Caco-2 (cell line): ENCODE measurements at regions of chr17 and their contacts with region 1.

Region 1: DNA sequence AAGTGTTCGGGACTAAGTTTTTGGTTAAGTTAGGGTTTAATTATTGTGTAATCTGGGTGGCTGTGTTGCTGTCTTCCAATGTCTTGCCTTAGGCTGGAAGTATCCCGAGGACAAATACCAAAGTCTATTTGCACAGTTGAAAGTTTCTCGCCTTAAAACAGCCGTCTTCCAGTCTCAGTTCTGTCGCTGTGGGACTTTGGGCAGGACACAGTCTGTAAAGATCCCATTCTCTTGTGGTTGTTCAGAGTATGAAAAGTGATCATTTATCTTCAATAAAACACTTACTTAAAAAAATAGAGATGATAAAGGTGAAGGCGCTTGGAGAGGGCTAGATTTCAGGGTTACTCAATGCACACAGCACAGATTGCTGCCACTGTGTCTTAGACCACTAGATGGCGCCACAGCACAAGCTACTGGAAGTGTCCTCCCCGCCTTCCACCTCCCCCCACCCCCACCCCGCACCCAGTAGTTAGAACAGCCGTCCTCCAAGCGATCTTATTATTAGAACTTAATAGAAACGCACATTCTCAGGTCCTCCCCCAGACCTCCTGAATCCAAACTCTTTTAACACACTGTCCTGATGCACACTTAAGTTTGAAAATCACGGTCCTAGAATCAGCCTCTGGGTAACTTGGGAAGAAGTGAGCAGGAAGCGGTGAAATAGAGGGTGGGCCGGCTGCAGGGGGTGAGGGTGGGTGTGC is 45.9 kb downstream of the AKAP1 start:
- DNase-seq: peak; percentile 85 to 87
- H3K4me3 ChIP-seq: peak overlapping the region; percentile 27; the same call in 1 of the 2 replicates
- H3K4me3 Mint-ChIP-seq: peak overlapping the region; percentile 57
- H3K27ac Mint-ChIP-seq: no peak overlapping the region
- H3K4me1 ChIP-seq: peaks cover 6% of the 10 kb centered on the region; the same call in 1 of the 2 replicates
- H3K4me1 Mint-ChIP-seq: peaks cover 10% of the 10 kb centered on the region
- H3K27me3 ChIP-seq: no peaks in the 10 kb centered on the region
- H3K27me3 Mint-ChIP-seq: no peaks in the 10 kb centered on the region
- CTCF ChIP-seq: peak; percentile 92 to 97

Region 2: GRCh38 chr17:56985371-56986162 is 145.3 kb before region 1 on chr17:
- CTCF ChIA-PET with region 1: no interaction called
- POLR2A ChIA-PET with region 1: no interaction called
- intact Hi-C with region 1: no loop called
- DNase-seq: no peak
- H3K4me3 ChIP-seq: no peak overlapping the region
- H3K4me3 Mint-ChIP-seq: no peak overlapping the region
- H3K27ac Mint-ChIP-seq: no peak overlapping the region
- H3K4me1 ChIP-seq: no peaks in the 10 kb centered on the region
- H3K4me1 Mint-ChIP-seq: peaks cover 7% of the 10 kb centered on the region
- H3K27me3 ChIP-seq: no peaks in the 10 kb centered on the region
- H3K27me3 Mint-ChIP-seq: no peaks in the 10 kb centered on the region
- CTCF ChIP-seq: no peak

Region 3: GRCh38 chr17:57106107-57106835 is 24.6 kb before region 1 on chr17:
- CTCF ChIA-PET with region 1: no interaction called
- POLR2A ChIA-PET with region 1: no interaction called
- intact Hi-C with region 1: no loop called
- DNase-seq: peak; percentile 51 to 52
- H3K4me3 ChIP-seq: no peak overlapping the region
- H3K4me3 Mint-ChIP-seq: no peak overlapping the region
- H3K27ac Mint-ChIP-seq: no peak overlapping the region
- H3K4me1 ChIP-seq: peaks cover 13% of the 10 kb centered on the region
- H3K4me1 Mint-ChIP-seq: peaks cover 6% of the 10 kb centered on the region
- H3K27me3 ChIP-seq: no peaks in the 10 kb centered on the region
- H3K27me3 Mint-ChIP-seq: no peaks in the 10 kb centered on the region
- CTCF ChIP-seq: peak; percentile 34 to 50

Region 4: GRCh38 chr17:57142925-57143324 is 12.0 kb after region 1 on chr17:
- CTCF ChIA-PET with region 1: no interaction called
- POLR2A ChIA-PET with region 1: no interaction called
- intact Hi-C with region 1: no loop called
- DNase-seq: no peak
- H3K4me3 ChIP-seq: no peak overlapping the region
- H3K4me3 Mint-ChIP-seq: no peak overlapping the region
- H3K27ac Mint-ChIP-seq: no peak overlapping the region
- H3K4me1 ChIP-seq: 0 out of 2 replicates have a peak, but pooled peaks cover 2% of the 10 kb centered on the region
- H3K4me1 Mint-ChIP-seq: no peaks in the 10 kb centered on the region
- H3K27me3 ChIP-seq: no peaks in the 10 kb centered on the region
- H3K27me3 Mint-ChIP-seq: no peaks in the 10 kb centered on the region
- CTCF ChIP-seq: no peak

Region 5: GRCh38 chr17:57158296-57158695 is 27.4 kb after region 1 on chr17:
- CTCF ChIA-PET with region 1: no interaction called
- POLR2A ChIA-PET with region 1: no interaction called
- intact Hi-C with region 1: no loop called
- DNase-seq: no peak
- H3K4me3 ChIP-seq: no peak overlapping the region
- H3K4me3 Mint-ChIP-seq: no peak overlapping the region
- H3K27ac Mint-ChIP-seq: no peak overlapping the region
- H3K4me1 ChIP-seq: no peaks in the 10 kb centered on the region
- H3K4me1 Mint-ChIP-seq: no peaks in the 10 kb centered on the region
- H3K27me3 ChIP-seq: no peaks in the 10 kb centered on the region
- H3K27me3 Mint-ChIP-seq: no peaks in the 10 kb centered on the region
- CTCF ChIP-seq: no peak

Region 6: GRCh38 chr17:57408071-57408811 is 277.3 kb after region 1 on chr17:
- CTCF ChIA-PET with region 1: no interaction called
- POLR2A ChIA-PET with region 1: no interaction called
- intact Hi-C with region 1: loop called (anchors 10 kb)
- DNase-seq: no peak
- H3K4me3 ChIP-seq: no peak overlapping the region
- H3K4me3 Mint-ChIP-seq: no peak overlapping the region
- H3K27ac Mint-ChIP-seq: peak overlapping the region; percentile 93
- H3K4me1 ChIP-seq: peaks cover 30% of the 10 kb centered on the region
- H3K4me1 Mint-ChIP-seq: peaks cover 32% of the 10 kb centered on the region
- H3K27me3 ChIP-seq: no peaks in the 10 kb centered on the region; the same call in 1 of the 2 replicates
- H3K27me3 Mint-ChIP-seq: no peaks in the 10 kb centered on the region
- CTCF ChIP-seq: no peak

Region 7: DNA sequence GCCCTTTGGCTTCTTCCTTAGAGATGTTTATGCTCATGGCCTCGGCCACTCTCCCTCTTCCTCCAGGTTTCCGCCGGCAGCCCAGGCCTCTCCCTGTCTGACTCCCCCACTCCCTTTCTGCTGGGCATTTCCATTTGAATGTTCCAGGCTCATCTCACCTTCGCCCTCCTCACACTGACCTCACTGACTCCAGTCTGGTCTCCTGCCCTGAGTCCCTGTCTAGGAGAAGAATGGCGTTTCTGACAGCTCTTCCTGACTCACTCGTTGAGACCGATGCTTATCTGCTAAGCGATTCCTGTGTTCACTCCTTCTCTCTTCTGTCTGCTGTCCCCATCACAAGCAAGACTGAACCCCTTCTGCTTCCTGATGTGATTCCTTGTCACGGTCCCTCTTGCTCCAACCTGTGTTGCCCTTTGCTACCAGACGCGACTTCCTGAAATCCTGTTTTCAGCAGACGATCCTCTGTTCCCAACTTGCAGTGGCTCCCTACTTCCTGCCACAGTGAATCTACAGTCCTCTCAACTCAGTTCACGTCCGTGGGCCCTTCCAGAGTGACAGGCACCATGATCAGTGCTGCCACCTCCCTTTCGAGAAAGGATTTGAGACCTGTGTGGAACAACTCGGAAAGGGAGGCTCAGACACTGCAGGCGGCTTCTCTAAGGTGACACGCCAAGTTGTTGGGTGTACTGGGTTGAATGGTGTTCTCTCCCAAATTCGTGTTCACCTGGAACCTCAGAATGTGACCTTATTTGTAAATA is 301.8 kb after region 1 on chr17:
- CTCF ChIA-PET with region 1: no interaction called
- POLR2A ChIA-PET with region 1: no interaction called
- intact Hi-C with region 1: loop called (anchors 10 kb)
- DNase-seq: no peak
- H3K4me3 ChIP-seq: no peak overlapping the region
- H3K4me3 Mint-ChIP-seq: no peak overlapping the region
- H3K27ac Mint-ChIP-seq: peak overlapping the region; percentile 33
- H3K4me1 ChIP-seq: peaks cover 25% of the 10 kb centered on the region
- H3K4me1 Mint-ChIP-seq: peaks cover 57% of the 10 kb centered on the region
- H3K27me3 ChIP-seq: no peaks in the 10 kb centered on the region
- H3K27me3 Mint-ChIP-seq: no peaks in the 10 kb centered on the region
- CTCF ChIP-seq: no peak

Region 8: DNA sequence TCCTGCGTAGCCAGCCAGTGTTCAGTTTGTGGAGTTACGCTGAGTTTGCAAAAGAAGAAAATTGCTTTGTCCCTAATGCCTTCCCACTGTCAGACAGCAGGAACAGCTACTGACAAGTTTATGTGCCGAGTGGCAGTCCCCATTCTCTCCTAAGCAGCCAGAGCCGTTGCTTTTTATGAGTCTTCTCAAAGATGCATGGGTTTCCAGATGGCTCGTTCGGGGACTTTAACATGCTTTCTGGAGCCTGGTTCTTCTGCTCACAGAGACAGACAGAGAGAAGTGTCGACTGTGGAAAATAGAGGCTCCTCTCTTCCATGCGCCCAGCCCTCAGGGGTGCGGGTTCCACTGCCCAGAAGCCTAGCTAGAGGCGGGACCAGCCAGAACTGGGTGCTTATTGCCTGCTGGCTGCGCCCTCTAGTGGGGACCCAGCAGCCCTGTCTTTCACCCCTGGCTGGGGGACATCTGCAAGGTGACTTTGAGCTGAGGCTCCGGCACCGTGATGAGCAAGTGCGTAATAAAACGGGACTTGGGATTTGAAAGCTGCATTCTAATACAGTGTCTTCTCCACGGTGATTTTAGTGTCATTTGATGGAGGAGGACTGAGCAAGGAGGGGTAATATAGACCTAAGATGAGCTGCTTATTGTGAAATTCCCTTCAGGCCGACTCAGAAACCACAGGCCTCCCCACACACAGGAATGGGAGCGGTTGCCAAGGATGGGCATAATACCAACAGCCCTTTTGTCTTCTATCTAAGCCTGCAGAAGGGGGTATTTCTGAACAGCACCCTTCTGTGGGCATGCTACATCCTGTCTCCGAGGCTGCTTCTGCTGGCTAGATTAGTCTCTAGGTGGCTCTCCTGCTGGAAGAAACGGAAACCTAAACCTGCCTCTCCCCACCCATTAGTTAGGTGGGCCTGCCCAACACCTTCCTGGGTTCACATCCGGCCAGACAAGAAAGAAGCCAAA is 541.0 kb after region 1 on chr17:
- CTCF ChIA-PET with region 1: interaction called, 7 read pairs
- POLR2A ChIA-PET with region 1: no interaction called
- intact Hi-C with region 1: loop called (anchors 1 kb)
- DNase-seq: peak; percentile 75 to 82
- H3K4me3 ChIP-seq: no peak overlapping the region
- H3K4me3 Mint-ChIP-seq: no peak overlapping the region
- H3K27ac Mint-ChIP-seq: no peak overlapping the region
- H3K4me1 ChIP-seq: no peaks in the 10 kb centered on the region
- H3K4me1 Mint-ChIP-seq: no peaks in the 10 kb centered on the region
- H3K27me3 ChIP-seq: no peaks in the 10 kb centered on the region
- H3K27me3 Mint-ChIP-seq: no peaks in the 10 kb centered on the region
- CTCF ChIP-seq: peak; percentile 91 to 96

Region 9: DNA sequence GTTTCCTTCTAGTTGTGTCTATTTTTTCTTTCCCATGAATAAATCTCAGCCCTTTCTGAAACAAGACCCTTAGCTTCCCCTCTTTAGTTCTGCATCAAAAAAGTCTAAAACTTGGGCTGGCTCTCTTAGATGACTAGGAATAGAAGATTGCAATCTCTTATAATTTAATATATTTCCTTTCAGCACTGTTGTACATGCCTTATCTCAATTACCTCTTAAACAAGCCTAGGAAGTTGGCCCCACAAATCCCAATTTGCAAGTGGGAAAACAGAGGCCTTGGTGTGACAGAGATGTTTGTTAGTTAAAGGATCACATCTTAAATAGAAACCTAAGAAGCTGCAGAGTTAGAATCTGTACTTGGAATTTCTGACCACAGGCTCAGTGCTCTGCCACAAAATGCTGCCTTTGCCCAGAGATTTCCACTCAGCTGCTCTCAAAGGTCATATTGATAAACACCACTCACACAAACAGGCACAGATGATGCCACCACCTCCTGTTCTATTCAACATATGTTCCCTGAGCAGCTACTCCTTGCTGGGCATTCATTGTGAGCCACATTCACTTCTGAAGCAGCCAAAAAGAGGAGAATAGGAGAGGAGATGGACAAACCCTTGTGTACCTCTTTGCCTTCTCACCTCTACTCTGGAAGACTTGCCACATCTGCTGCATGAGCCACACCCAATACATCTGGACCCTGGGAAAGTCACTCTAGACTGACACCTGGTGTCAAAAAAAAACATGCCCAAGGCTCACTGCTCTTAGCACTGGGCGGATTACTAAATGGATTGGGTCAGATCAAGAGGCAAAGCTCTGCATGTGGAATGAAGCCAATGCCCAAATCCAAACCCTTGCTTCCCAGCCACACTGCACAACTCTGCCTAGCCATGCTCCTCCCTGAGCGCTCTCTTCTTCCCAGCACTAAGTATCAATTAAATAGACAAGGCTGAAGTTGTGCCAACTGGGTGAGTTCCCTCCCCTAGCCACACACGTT is 608.8 kb after region 1 on chr17:
- CTCF ChIA-PET with region 1: interaction called, 3 read pairs
- POLR2A ChIA-PET with region 1: no interaction called
- intact Hi-C with region 1: loop called (anchors 1 kb)
- DNase-seq: peak in 1 of 2 experiments; percentile 62
- H3K4me3 ChIP-seq: no peak overlapping the region
- H3K4me3 Mint-ChIP-seq: no peak overlapping the region
- H3K27ac Mint-ChIP-seq: no peak overlapping the region
- H3K4me1 ChIP-seq: no peaks in the 10 kb centered on the region
- H3K4me1 Mint-ChIP-seq: no peaks in the 10 kb centered on the region
- H3K27me3 ChIP-seq: no peaks in the 10 kb centered on the region
- H3K27me3 Mint-ChIP-seq: peaks cover 17% of the 10 kb centered on the region
- CTCF ChIP-seq: peak; percentile 65 to 69

Region 10: DNA sequence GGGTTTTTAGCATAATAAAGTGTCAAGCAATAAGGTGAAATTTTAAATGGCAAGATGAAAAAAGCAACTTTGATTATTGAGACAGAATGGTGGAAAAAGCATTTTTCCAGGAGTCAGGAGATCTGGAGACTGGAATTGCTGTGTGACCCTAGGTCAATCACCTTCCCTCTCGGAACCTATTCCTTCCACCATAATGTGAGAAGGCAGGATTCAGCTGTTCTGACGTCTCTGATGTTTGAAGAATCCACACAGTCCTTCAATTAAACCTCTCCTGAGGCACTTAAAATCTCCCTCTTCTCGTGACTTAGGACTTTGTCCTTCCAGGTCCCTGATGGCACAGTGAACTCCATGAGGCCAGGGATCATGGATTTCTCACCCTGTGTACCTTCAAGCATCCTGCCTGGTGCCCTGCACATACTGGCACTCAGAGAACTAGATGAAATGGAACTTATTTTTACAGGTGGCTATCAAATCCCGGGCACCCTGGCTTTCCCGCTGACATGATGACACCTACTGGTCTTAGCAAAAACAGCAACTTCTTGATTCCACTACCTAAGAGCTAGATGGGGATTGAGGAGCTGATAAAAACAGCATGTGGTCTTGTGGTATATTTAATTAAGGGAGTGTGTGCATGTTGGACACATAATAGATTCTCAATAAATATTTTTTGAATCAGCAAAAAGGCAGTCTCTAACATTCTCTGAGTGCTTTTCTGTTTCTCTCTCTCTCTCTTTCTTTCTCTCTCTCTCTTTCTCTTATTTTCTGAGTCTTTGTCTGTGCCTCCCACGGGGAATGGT is 616.5 kb after region 1 on chr17:
- CTCF ChIA-PET with region 1: interaction called, 3 read pairs
- POLR2A ChIA-PET with region 1: no interaction called
- intact Hi-C with region 1: loop called (anchors 1 kb)
- DNase-seq: peak in 1 of 2 experiments; percentile 51
- H3K4me3 ChIP-seq: no peak overlapping the region
- H3K4me3 Mint-ChIP-seq: no peak overlapping the region
- H3K27ac Mint-ChIP-seq: no peak overlapping the region
- H3K4me1 ChIP-seq: no peaks in the 10 kb centered on the region
- H3K4me1 Mint-ChIP-seq: no peaks in the 10 kb centered on the region
- H3K27me3 ChIP-seq: no peaks in the 10 kb centered on the region; the same call in 1 of the 2 replicates
- H3K27me3 Mint-ChIP-seq: peaks cover 16% of the 10 kb centered on the region
- CTCF ChIP-seq: peak; percentile 72 to 83

Region 11: DNA sequence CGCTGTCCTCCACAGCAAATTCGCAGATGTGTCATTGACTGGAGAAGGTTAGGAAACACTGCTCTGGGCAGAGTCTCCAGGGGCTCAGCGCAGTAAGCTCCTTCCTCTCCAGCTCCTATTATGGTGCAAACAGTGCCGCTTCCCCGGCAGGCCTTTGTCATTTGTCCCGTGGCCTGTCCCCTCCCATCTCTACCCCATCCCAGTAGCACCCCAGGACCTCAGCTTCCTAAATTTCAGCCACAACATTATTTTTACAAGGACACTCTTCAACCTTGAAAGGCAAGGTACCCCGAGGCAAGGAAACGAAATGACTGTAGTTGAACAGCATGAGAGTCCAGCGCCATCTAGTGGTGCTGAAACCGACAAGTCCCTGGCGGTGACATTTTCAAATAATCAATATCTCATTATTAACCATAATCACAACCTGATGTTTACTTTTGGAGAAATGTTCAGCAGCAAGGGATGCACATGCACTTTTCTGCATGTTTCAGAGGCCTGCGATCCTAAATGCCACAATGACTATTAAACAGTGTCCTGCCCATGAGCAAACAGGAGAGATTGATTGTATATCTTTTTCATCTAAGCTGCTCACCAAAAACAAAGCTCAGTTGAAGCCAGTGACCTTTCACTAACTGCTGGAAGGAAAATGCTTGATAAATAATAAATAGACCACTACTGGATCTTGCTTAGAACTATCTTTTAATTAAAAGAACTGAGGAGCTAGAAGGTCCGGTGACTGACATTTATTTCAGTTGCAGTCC is 702.4 kb after region 1 on chr17:
- CTCF ChIA-PET with region 1: interaction called, 7 read pairs
- POLR2A ChIA-PET with region 1: no interaction called
- intact Hi-C with region 1: loop called (anchors 1 kb)
- DNase-seq: peak; percentile 65 to 68
- H3K4me3 ChIP-seq: no peak overlapping the region
- H3K4me3 Mint-ChIP-seq: no peak overlapping the region
- H3K27ac Mint-ChIP-seq: no peak overlapping the region
- H3K4me1 ChIP-seq: peaks cover 5% of the 10 kb centered on the region; the same call in 1 of the 2 replicates
- H3K4me1 Mint-ChIP-seq: peaks cover 6% of the 10 kb centered on the region
- H3K27me3 ChIP-seq: no peaks in the 10 kb centered on the region
- H3K27me3 Mint-ChIP-seq: no peaks in the 10 kb centered on the region
- CTCF ChIP-seq: peak; percentile 91 to 93